Ovary (tissue), 10 donors: ENCODE measurements at regions of chr14 and their contacts with region 1.

Region 1: GRCh38 chr14:77320238-77320935 is at the start of gene POMT2:
- DNase-seq: peak; percentile 92 to 95 (median 94)
- H3K4me3 ChIP-seq: peak within 1 kb of the TSS; percentile 100
- H3K27ac ChIP-seq: peak within 1 kb of the TSS; percentile 88 to 94
- H3K4me1 ChIP-seq: peaks cover 1% of the 10 kb centered on the region
- H3K27me3 ChIP-seq: no peaks in the 10 kb centered on the region
- CTCF ChIP-seq: peak; percentile 58 to 84 (median 74)
- EP300 ChIP-seq: no peak
- POLR2A ChIP-seq: peak; percentile 69
- total RNA-seq, gene POMT2: 10.8 to 31.7 (median 16.1) TPM

Region 2: DNA sequence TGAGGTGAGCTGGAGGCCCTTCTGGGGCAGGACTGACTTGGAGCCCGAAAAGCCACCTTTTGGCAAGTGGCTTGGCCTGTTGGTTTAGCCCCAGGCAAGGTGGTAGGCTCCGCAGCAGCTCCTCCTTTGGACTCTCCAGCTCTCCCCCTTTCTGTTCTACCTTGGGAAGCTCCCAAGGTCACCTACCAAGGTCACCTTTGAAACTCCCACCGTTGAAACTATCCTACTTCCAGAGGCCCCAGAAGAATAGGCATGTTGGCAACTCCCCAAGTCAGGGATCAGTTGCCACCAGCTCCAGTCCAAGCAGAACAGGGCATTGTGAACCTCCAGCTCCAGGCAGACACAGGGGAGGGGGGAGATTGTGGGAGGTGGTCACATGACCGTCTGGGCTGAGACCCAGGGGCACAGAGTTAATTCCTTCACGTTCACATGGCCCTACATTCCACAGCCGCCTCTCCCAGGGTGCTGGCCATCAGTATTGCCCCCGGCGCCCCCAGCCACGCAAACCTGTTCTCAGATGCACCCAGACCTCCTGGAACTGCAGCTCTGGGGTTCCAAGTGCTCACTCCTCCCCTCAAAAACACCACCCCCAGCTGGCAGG is 306.3 kb before region 1 on chr14:
- intact Hi-C with region 1: no loop called
- DNase-seq: peak; percentile 74 to 87 (median 81)
- H3K4me3 ChIP-seq: no peak overlapping the region
- H3K27ac ChIP-seq: peak overlapping the region in 1 of 2 donors; percentile 29
- H3K4me1 ChIP-seq: peaks cover 11% of the 10 kb centered on the region
- H3K27me3 ChIP-seq: no peaks in the 10 kb centered on the region
- CTCF ChIP-seq: no peak
- EP300 ChIP-seq: no peak
- POLR2A ChIP-seq: no peak

Region 3: GRCh38 chr14:77181603-77182437 is 138.6 kb before region 1 on chr14 and contains the start of gene TMEM63C:
- intact Hi-C with region 1: no loop called
- DNase-seq: no peak
- H3K4me3 ChIP-seq: peak within 1 kb of the TSS; percentile 7
- H3K27ac ChIP-seq: no peak within 1 kb of the TSS
- H3K4me1 ChIP-seq: peaks cover 8% of the 10 kb centered on the region
- H3K27me3 ChIP-seq: no peaks in the 10 kb centered on the region
- CTCF ChIP-seq: no peak
- EP300 ChIP-seq: no peak
- POLR2A ChIP-seq: no peak
- total RNA-seq, gene TMEM63C: 0.23 to 0.77 (median 0.25) TPM in 6 of 7 donors, not detected in the other

Region 4: GRCh38 chr14:77406718-77407117 is 86.3 kb after region 1 on chr14:
- intact Hi-C with region 1: no loop called
- DNase-seq: peak in 3 of 5 donors; percentile 20 to 35 (median 23)
- H3K4me3 ChIP-seq: no peak overlapping the region
- H3K27ac ChIP-seq: no peak overlapping the region
- H3K4me1 ChIP-seq: peaks cover 1% of the 10 kb centered on the region
- H3K27me3 ChIP-seq: no peaks in the 10 kb centered on the region
- CTCF ChIP-seq: no peak
- EP300 ChIP-seq: no peak
- POLR2A ChIP-seq: no peak

Region 5: DNA sequence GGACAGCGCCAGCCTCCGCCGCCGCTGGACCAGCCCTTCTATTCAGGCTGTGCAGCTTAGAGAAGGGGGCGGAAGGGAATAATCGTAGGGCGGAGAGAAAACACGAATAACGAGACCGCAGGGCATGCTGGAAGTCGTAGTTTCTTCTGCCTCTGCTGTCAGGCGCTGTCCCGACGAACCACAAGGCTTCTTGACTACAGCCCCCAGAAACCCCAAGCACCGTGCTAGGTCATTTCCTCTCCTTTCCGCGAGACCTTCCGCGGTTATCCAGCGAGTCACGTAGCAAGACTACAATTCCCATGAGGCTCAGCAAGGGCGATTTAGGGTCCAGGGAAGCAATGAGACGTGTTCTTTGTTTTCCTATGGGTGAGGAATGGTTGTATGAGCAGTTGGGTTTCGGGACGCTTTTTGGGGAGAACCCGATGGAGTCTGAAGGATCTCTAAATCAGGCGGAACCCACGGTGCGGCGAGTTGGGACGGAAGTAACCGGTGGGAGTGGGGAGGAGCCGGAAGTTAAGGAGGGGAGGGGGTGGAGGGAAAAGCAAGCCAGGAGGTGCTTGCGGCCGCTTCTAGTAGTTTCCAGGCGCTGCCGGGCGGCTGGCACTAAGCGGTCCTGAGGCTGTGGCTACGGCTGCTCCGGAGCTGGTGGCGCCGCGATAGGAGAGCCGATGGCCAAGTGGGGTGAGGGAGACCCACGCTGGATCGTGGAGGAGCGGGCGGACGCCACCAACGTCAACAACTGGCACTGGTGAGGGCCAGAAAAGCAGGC is 137.3 kb after region 1 on chr14 and contains the starts of genes AHSA1 and VIPAS39:
- intact Hi-C with region 1: loop called in 2 of 4 experiments (anchors 5 to 10 kb)
- DNase-seq: peak; percentile 91 to 95 (median 92)
- H3K4me3 ChIP-seq: peak within 1 kb of the TSS; percentile 82
- H3K27ac ChIP-seq: peak within 1 kb of the TSS; percentile 84 to 97
- H3K4me1 ChIP-seq: no peaks in the 10 kb centered on the region
- H3K27me3 ChIP-seq: no peaks in the 10 kb centered on the region
- CTCF ChIP-seq: no peak
- EP300 ChIP-seq: no peak
- POLR2A ChIP-seq: peak; percentile 62
- total RNA-seq, gene AHSA1: 57.3 to 127 (median 96.6) TPM
- total RNA-seq, gene VIPAS39: 10.7 to 18.0 (median 15.1) TPM